Activated B cell treated with CpG ODN at 0.5 μM for 24 hours (primary cell): ENCODE measurements at regions of chr5 and their contacts with region 1.

Region 1: DNA sequence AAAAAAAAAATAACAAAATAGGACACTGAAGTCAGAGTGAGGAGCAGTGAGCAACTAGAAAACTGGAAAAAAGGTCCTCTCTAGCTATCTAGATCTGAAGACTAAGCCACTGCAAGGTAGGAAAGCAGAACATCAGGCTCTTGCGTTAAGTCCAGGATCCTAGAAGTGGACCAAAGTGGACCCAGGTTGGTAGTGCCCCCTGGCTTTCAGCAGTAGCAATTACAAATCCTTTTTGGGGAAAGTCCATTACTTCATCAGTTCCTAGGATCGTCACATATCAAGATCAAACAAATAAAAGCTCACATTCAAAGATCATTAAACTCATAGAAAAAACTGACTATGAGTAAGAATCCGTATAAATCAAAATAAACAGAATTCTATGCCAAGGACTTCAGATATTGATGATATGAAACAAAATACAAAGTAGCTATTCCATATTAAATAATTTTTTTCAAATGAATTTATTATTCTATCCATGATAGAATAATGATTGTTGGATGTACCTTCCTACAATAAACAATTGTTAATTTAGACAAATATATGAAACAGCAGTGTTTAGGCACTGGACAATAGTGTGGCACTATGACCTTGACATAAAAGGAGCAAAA is 6.5 kb upstream of the RICTOR start:
- DNase-seq: no peak
- ATAC-seq: no peak
- H3K4me3 Mint-ChIP-seq: no peak overlapping the region
- H3K27ac Mint-ChIP-seq: no peak overlapping the region
- H3K4me1 Mint-ChIP-seq: peaks cover 24% of the 10 kb centered on the region
- H3K27me3 Mint-ChIP-seq: no peaks in the 10 kb centered on the region
- CTCF ChIP-seq: no peak

Region 2: DNA sequence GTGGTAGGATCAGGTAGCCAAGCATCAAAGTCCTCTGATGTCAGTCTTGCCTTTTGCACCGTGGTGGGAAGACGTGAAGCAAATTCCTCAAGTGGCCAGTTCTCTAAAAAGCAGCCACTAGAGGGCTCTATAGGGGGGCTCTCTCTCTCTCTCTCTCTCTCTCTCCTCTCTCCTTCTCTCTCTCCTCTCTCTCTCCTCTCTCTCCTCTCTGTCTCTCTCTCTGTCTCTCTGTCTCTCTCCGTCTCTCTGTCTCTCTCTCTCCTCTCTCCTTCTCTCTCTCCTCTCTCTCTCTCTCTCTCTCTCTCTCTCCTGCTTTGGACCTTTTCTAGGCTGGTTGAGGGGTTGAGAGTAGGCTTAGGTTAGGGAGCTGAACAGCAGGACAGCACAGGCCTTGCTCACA is 248.8 kb before region 1 on chr5:
- CTCF ChIA-PET with region 1: no interaction called
- POLR2A ChIA-PET with region 1: no interaction called
- intact Hi-C with region 1: loop called (anchors 5 kb)
- DNase-seq: no peak
- ATAC-seq: no peak
- H3K4me3 Mint-ChIP-seq: no peak overlapping the region
- H3K27ac Mint-ChIP-seq: no peak overlapping the region
- H3K4me1 Mint-ChIP-seq: no peaks in the 10 kb centered on the region
- H3K27me3 Mint-ChIP-seq: peaks cover 8% of the 10 kb centered on the region
- CTCF ChIP-seq: no peak